CD8-positive, alpha-beta memory T cell (primary cell): ENCODE measurements at regions of chr1 and their contacts with region 1.

Region 1: DNA sequence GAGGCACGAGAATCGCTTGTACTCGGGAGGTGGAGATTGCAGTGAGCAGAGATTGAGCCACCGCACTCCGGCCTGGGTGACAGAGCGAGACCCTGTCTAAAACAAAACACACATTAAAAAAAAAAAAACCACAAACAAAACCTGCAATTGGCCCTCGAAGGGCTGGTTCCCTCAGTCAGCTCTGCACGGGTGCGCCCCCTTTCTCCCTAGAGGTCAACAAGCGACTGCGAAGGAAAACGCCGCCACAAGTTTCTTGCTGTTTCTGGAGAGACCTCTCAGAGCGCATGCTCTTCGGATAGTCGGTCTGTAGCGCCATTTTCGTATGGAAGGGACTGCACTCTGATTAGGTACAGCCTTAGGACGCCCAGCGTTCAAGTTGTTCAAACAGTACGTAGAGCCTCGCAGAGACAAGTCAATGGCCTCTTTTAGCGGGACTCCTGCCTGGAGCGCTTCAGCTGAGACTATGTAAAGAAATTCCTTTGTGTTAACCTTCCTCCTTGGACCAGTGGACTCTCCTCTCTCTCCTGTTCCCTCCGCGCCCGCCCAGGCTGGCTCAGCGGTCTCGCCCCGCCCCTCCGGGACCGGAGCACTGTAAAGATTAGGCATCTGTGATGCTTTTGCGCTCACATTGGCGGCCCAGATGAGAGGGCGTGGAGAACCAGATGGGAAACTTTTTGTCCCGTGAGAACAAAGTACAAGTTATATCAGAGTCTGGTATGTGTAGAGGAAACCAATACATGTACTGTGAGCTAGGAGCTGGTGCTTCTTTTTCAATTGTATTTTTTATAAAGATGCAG is 1.0 kb upstream of the CDC14A start:
- DNase-seq: peak; percentile 82 to 92 (median 87)
- H3K4me3 ChIP-seq: peak overlapping the region; percentile 94
- H3K4me3 Mint-ChIP-seq: peak overlapping the region; percentile 94 to 100 (median 97)
- H3K27ac ChIP-seq: peak overlapping the region; percentile 92
- H3K27ac Mint-ChIP-seq: peak overlapping the region; percentile 97 to 100 (median 100)
- H3K4me1 ChIP-seq: peaks cover 23% of the 10 kb centered on the region
- H3K4me1 Mint-ChIP-seq: peaks cover 27 to 36% (median 31%) of the 10 kb centered on the region in 3 donors
- H3K27me3 ChIP-seq: no peaks in the 10 kb centered on the region
- H3K27me3 Mint-ChIP-seq: peaks cover 0 to 10% of the 10 kb centered on the region in 2 donors

Region 2: DNA sequence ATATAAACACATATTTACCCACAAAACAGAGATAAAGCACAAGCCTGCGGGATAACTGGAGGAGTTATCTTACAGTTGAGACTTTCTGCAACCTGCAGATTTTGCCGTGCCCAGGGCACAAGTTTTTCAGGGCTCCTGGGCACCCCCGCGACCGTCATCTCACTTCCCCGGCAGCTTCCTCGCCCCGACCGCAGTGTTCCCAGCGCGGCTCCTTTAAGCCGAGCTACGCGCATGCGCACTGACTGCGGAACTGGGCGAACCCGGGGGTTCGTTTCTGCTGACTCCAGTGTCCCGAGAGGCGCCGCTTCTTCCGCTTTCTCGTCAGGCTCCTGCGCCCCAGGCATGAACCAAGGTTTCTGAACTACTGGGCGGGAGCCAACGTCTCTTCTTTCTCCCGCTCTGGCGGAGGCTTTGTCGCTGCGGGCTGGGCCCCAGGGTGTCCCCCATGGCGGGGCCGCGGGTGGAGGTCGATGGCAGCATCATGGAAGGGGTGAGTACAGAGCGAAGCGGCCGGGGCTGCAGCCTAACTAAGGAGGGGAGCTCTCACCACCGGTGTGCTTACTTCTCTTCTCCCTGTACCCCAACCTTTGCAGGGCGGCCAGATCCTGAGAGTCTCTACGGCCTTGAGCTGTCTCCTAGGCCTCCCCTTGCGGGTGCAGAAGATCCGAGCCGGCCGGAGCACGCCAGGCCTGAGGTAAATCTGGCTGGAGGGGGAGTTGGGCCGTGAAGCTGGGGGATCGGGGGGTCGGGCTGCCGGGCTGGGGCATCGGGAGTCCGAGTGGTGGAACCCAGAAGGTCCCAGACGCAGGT is 85.2 kb before region 1 on chr1 and contains the start of gene RTCA:
- CTCF ChIA-PET with region 1: interaction called, 8 read pairs
- POLR2A ChIA-PET with region 1: interaction called, 13 read pairs
- DNase-seq: peak; percentile 93 to 98 (median 95)
- H3K4me3 ChIP-seq: peak within 1 kb of the TSS; percentile 97
- H3K4me3 Mint-ChIP-seq: peak within 1 kb of the TSS; percentile 94 to 100 (median 100)
- H3K27ac ChIP-seq: peak within 1 kb of the TSS; percentile 93
- H3K27ac Mint-ChIP-seq: peak within 1 kb of the TSS; percentile 80 to 98 (median 98)
- H3K4me1 ChIP-seq: peaks cover 36% of the 10 kb centered on the region
- H3K4me1 Mint-ChIP-seq: peaks cover 45 to 60% (median 54%) of the 10 kb centered on the region in 3 donors
- H3K27me3 ChIP-seq: no peaks in the 10 kb centered on the region
- H3K27me3 Mint-ChIP-seq: peaks cover 0 to 4% of the 10 kb centered on the region in 2 donors
- total RNA-seq, gene RTCA: 64.5 to 68.3 TPM

Region 3: GRCh38 chr1:100400404-100400803 is 49.1 kb after region 1 on chr1:
- CTCF ChIA-PET with region 1: interaction called, 13 read pairs
- POLR2A ChIA-PET with region 1: interaction called, 13 read pairs
- DNase-seq: peak; percentile 39 to 82 (median 78)
- H3K4me3 ChIP-seq: peak overlapping the region; percentile 21
- H3K4me3 Mint-ChIP-seq: peak overlapping the region; percentile 67 to 86 (median 77)
- H3K27ac ChIP-seq: peak overlapping the region; percentile 13
- H3K27ac Mint-ChIP-seq: peak overlapping the region; percentile 77 to 98 (median 87)
- H3K4me1 ChIP-seq: peaks cover 98% of the 10 kb centered on the region
- H3K4me1 Mint-ChIP-seq: peaks cover 85 to 94% (median 94%) of the 10 kb centered on the region in 3 donors
- H3K27me3 ChIP-seq: no peaks in the 10 kb centered on the region
- H3K27me3 Mint-ChIP-seq: no peaks in the 10 kb centered on the region

Region 4: DNA sequence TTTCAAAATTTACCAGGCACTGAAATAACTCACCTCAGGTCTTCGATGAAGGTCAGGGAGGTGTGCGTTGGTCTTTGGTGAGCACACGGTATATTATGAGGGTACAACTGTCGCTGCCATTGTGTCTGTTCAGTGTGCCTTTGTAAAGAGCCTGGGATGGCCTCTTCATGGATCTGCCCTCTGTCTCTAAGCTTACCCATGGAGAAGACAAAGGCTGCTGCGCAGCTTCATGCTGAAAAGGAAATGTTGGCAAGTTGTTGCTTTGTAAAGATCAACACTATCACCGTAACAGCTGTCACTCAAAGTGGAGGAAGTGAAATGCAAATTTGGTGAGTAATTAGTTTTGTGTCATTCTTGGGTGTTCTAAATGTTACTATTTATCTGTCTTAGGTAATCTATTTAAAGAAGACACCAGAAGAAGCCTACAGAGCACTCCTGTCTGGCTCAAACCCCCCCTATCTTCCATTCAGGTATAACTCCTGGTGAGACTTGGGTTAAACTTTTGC is 72.6 kb after region 1 on chr1:
- CTCF ChIA-PET with region 1: interaction called, 14 read pairs
- POLR2A ChIA-PET with region 1: interaction called, 24 read pairs
- DNase-seq: peak in 1 of 5 donors; percentile 64
- H3K4me3 ChIP-seq: peak overlapping the region; percentile 35
- H3K4me3 Mint-ChIP-seq: peak overlapping the region; percentile 84 to 95 (median 91)
- H3K27ac ChIP-seq: peak overlapping the region; percentile 66
- H3K27ac Mint-ChIP-seq: peak overlapping the region; percentile 83 to 99 (median 96)
- H3K4me1 ChIP-seq: peaks cover 42% of the 10 kb centered on the region
- H3K4me1 Mint-ChIP-seq: peaks cover 71 to 92% (median 89%) of the 10 kb centered on the region in 3 donors
- H3K27me3 ChIP-seq: no peaks in the 10 kb centered on the region
- H3K27me3 Mint-ChIP-seq: no peaks in the 10 kb centered on the region